ENCODE measurements at regions of chr12 and their contacts with region 1.

Region 1: GRCh38 chr12:91577586-91578539 is 395.2 kb upstream of the DCN start:
- DNase-seq: no peak
- ATAC-seq: peak in 6 of 8 donors; percentile 39 to 70 (median 61)
- H3K4me3 ChIP-seq: peak overlapping the region in 7 of 10 donors; percentile 16 to 33 (median 26)
- H3K27ac ChIP-seq: peak overlapping the region in 2 of 10 donors; percentile 2 to 11
- H3K4me1 ChIP-seq: peaks cover 0 to 17% (median 9%) of the 10 kb centered on the region in 9 donors
- H3K27me3 ChIP-seq: no peaks in the 10 kb centered on the region
- CTCF ChIP-seq: peak; percentile 56 to 84 (median 74)

Region 2: DNA sequence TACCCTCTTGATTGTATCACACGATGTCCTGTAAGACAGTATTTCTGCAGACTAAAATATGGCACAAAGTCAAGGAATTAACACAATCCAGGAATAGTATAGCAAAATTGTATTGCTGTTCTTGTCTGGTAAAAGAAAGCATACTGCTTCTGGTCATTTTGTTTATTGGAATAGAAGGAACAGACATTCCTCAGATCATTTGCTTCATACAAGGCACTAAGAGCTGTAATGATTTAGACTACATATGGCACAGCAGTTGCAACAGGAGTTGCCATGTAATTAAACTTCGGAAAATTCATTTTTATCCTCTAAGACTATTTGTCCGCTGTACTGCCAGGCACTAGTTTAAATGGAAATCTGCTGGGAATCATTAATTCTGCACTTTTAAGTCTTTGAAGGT is 512.5 kb before region 1 on chr12:
- intact Hi-C with region 1: no loop called
- DNase-seq: no peak
- ATAC-seq: no peak
- H3K4me3 ChIP-seq: no peak overlapping the region
- H3K27ac ChIP-seq: no peak overlapping the region
- H3K4me1 ChIP-seq: no peaks in the 10 kb centered on the region
- H3K27me3 ChIP-seq: no peaks in the 10 kb centered on the region
- CTCF ChIP-seq: no peak

Region 3: DNA sequence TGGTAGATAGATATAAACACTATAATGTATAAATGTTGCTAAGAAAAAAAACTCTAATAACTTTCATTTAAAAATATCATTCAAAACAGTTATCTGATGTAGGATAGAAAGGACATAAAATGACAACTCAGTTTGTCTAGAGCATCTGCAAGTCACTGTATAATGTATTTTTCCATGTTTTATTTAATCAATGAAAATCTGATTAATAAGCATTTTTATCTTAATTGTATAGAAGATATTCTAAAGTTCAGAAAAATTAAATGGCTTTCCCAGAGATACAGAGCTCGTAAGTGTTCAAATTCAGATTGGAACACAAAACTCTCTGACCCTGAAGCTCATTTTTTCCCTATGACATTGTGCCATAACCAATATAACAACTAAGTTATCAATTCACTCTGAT is 99.4 kb before region 1 on chr12:
- intact Hi-C with region 1: no loop called
- DNase-seq: no peak
- ATAC-seq: no peak
- H3K4me3 ChIP-seq: no peak overlapping the region
- H3K27ac ChIP-seq: no peak overlapping the region
- H3K4me1 ChIP-seq: no peaks in the 10 kb centered on the region
- H3K27me3 ChIP-seq: no peaks in the 10 kb centered on the region
- CTCF ChIP-seq: no peak

Region 4: GRCh38 chr12:91667725-91668124 is 89.9 kb after region 1 on chr12:
- intact Hi-C with region 1: loop called in 1 of 10 experiments (anchors 5 kb)
- DNase-seq: no peak
- ATAC-seq: no peak
- H3K4me3 ChIP-seq: no peak overlapping the region
- H3K27ac ChIP-seq: no peak overlapping the region
- H3K4me1 ChIP-seq: peaks cover 0 to 22% (median 4%) of the 10 kb centered on the region in 9 donors
- H3K27me3 ChIP-seq: no peaks in the 10 kb centered on the region
- CTCF ChIP-seq: no peak

Region 5: GRCh38 chr12:91804533-91804932 is 226.7 kb after region 1 on chr12:
- intact Hi-C with region 1: loop called in 2 of 10 experiments (anchors 10 kb)
- DNase-seq: no peak
- ATAC-seq: no peak
- H3K4me3 ChIP-seq: no peak overlapping the region
- H3K27ac ChIP-seq: no peak overlapping the region
- H3K4me1 ChIP-seq: no peaks in the 10 kb centered on the region
- H3K27me3 ChIP-seq: no peaks in the 10 kb centered on the region
- CTCF ChIP-seq: no peak

Region 6: GRCh38 chr12:91811481-91812287 is 233.8 kb after region 1 on chr12:
- intact Hi-C with region 1: loop called in 3 of 10 experiments (anchors 5 to 10 kb)
- DNase-seq: peak; percentile 70 to 71
- ATAC-seq: peak in 6 of 8 donors; percentile 65 to 84 (median 75)
- H3K4me3 ChIP-seq: no peak overlapping the region
- H3K27ac ChIP-seq: peak overlapping the region in 1 of 10 donors; percentile 11
- H3K4me1 ChIP-seq: peaks cover 0 to 8% (median 0%) of the 10 kb centered on the region in 9 donors
- H3K27me3 ChIP-seq: no peaks in the 10 kb centered on the region
- CTCF ChIP-seq: peak; percentile 71 to 90 (median 84)

Measured in heart right ventricle (tissue), 16 donors.